ENCODE measurements at regions of chr1 and their contacts with region 1.

Region 1: GRCh38 chr1:99177465-99177864 is 86.8 kb upstream of the PLPPR4 start:
- DNase-seq: no peak
- ATAC-seq: no peak
- H3K4me3 ChIP-seq: no peak overlapping the region
- H3K27ac ChIP-seq: no peak overlapping the region
- H3K4me1 ChIP-seq: no peaks in the 10 kb centered on the region
- H3K27me3 ChIP-seq: no peaks in the 10 kb centered on the region
- CTCF ChIP-seq: no peak; the same call in 1 of the 2 replicates

Region 2: DNA sequence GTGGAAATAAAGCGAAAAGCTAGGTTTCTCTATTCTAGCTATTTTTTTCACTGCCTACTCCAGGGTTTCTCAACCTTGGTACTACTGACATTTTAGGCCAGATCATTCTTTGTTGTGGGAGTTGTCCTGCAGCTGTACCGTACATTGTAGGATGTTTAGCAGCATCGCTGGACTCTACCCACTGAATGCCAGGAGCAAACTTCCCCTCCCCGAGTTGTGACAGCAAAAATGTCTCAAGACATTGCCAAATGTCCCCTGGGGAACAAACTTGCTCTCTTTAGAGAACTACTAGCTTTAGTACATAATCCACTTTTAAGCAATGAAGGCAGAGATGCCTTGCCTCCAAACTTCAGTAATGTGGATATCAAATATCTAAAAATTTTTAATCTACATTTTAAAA is 295.6 kb before region 1 on chr1:
- CTCF ChIA-PET with region 1: no interaction called
- POLR2A ChIA-PET with region 1: no interaction called
- in situ Hi-C with region 1: no loop called
- intact Hi-C with region 1: no loop called
- DNase-seq: no peak
- ATAC-seq: no peak
- H3K4me3 ChIP-seq: no peak overlapping the region
- H3K27ac ChIP-seq: no peak overlapping the region
- H3K4me1 ChIP-seq: no peaks in the 10 kb centered on the region
- H3K27me3 ChIP-seq: no peaks in the 10 kb centered on the region
- CTCF ChIP-seq: no peak

Region 3: GRCh38 chr1:99139876-99140275 is 37.6 kb before region 1 on chr1:
- CTCF ChIA-PET with region 1: no interaction called
- POLR2A ChIA-PET with region 1: no interaction called
- in situ Hi-C with region 1: no loop called
- intact Hi-C with region 1: no loop called
- DNase-seq: no peak
- ATAC-seq: no peak
- H3K4me3 ChIP-seq: no peak overlapping the region
- H3K27ac ChIP-seq: no peak overlapping the region
- H3K4me1 ChIP-seq: no peaks in the 10 kb centered on the region
- H3K27me3 ChIP-seq: no peaks in the 10 kb centered on the region
- CTCF ChIP-seq: no peak

Region 4: GRCh38 chr1:99481391-99481996 is 304.0 kb after region 1 on chr1:
- CTCF ChIA-PET with region 1: no interaction called
- POLR2A ChIA-PET with region 1: no interaction called
- in situ Hi-C with region 1: no loop called
- intact Hi-C with region 1: loop called (anchors 1 kb)
- DNase-seq: no peak
- ATAC-seq: no peak
- H3K4me3 ChIP-seq: no peak overlapping the region
- H3K27ac ChIP-seq: no peak overlapping the region
- H3K4me1 ChIP-seq: no peaks in the 10 kb centered on the region
- H3K27me3 ChIP-seq: no peaks in the 10 kb centered on the region
- CTCF ChIP-seq: peak; percentile 52; the same call in 1 of the 2 replicates

Measured in Panc1 (cell line).